Heart right ventricle (tissue), 16 donors: ENCODE measurements at regions of chr9 and their contacts with region 1.

Region 1: DNA sequence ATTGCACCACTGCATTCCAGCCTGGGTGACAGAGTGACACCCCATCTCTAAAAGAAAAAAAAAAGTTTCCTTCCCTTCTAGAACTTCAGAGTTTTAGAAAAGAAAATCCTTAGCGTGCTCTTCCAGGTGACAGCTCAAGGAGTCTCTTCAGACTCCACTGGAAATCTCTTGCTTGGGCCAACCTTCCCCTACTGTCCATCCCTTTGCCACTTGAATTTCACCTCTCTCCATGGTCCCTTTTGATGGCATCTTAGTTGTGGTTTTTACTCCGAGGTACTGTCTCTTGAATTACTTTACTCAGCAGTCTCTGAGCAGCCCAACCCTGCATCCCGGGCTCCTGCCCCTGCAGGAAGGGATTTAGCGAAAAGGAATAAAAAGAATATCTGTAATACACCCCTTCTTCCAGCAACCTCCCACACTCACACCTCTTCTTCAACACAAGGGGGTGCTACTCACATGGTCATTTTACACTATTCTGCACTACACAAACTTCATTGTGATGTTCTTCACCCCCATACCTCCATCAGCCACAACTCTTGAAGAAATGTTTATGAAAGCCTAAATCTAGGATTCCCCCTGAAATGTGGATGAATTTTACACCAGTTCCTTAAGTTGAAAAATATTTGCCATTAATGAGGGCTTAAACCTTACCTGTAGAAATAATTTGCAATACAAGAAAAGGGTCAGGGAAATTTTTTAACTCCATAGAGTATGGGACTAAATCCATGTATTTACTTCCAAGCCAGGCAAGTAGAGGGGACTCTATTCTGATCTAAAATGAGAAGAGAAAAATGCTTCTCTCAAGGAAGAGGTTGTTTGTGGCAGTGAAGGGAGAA is 25.9 kb downstream of the TPD52L3 start:
- DNase-seq: peak in 1 of 2 donors; percentile 12
- ATAC-seq: peak; percentile 61 to 86 (median 80)
- H3K4me3 ChIP-seq: no peak overlapping the region
- H3K27ac ChIP-seq: no peak overlapping the region
- H3K4me1 ChIP-seq: no peaks in the 10 kb centered on the region
- H3K27me3 ChIP-seq: peaks cover 0 to 8% (median 0%) of the 10 kb centered on the region in 7 donors
- CTCF ChIP-seq: peak; percentile 52 to 82 (median 78)

Region 2: DNA sequence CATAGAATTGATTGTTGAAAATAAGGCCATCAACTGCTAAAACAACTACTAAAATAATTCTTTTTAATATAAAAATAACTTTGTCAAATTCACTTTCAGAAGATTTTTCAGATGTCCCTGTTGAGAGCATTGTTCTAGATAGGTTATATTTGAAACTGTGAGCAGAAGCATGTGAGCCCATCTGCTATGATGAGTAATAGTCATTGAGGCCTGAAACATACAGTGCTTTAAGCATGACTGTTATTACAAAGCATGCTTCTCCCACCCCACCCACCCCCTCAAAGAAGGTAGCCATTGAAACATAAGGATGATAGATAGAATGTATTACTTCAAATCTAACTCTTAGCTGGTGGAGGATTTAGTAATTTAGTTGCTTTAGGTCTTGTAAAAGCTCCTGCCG is 144.9 kb after region 1 on chr9:
- intact Hi-C with region 1: loop called in 2 of 10 experiments (anchors 10 kb)
- DNase-seq: no peak
- ATAC-seq: no peak
- H3K4me3 ChIP-seq: no peak overlapping the region
- H3K27ac ChIP-seq: no peak overlapping the region
- H3K4me1 ChIP-seq: peaks cover 0 to 5% (median 0%) of the 10 kb centered on the region in 9 donors
- H3K27me3 ChIP-seq: no peaks in the 10 kb centered on the region
- CTCF ChIP-seq: no peak

Region 3: DNA sequence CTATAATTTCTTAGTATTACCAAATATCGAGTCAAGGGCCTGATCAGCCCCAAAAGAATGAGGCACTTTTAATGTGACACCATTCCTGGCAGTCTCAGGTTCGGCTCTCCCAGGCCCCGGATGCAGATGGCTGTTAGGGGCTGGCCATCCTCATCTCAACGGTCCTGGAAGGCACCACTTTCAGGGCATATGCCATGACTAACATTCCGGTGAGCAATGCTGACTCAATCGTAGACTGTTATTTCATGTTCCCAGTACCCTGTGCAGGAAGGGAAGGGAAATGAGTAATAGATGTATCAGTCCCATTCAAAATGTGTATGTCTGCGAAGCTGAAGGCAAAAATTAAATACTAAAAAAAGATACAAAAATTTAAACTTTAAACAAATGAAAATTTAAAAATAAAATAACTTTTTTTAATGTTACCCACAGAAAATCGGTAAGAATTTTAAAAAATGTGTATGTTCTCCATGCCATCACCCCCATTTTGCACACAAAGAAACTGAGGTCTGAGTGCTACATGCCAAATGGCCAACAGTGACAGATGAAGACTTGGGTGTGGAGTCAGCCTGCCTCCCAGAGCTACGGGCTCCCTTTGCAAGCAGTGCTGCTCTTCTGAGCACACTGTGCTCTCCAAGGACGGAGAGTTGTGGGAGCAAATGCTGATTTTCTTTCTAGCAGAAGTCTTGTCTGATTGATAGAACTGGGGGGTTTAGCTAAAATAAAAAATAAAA is 212.5 kb after region 1 on chr9:
- intact Hi-C with region 1: loop called (anchors 1 to 5 kb)
- DNase-seq: peak in 1 of 2 donors; percentile 11
- ATAC-seq: peak in 3 of 8 donors; percentile 51 to 64 (median 52)
- H3K4me3 ChIP-seq: no peak overlapping the region
- H3K27ac ChIP-seq: peak overlapping the region in 1 of 10 donors; percentile 85
- H3K4me1 ChIP-seq: peaks cover 0 to 54% (median 4%) of the 10 kb centered on the region in 9 donors
- H3K27me3 ChIP-seq: peaks cover 0 to 24% (median 7%) of the 10 kb centered on the region in 7 donors
- CTCF ChIP-seq: no peak

Region 4: DNA sequence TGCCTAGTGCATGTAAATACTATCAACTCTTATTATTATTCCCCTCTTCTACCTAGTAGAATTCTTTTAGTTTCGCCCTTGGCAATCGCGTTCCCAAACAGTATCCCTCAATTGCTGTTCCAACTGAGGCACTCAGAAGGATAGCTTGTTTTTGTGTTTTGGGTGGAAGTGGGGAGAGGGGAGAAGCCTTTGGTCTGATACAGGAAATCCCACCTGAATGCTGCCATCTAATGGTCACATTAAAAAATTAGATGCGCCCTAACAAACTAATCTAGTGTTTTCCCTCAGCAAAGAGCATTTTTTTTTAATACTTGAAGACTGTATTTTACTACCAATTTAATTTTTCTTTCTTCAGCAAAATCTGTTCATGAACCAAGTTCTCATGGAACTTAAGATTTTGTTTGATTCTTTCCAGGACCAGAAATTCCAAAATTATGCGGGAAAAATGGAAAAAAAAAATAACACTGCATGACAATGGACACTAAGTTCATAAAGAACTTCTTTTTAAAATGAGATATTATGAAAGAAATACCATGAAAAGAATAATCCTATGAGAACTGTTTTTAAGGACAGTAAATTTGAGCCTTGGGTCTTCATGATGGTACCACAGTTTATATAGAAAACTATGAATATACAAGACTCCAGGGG is 313.7 kb after region 1 on chr9:
- intact Hi-C with region 1: loop called in 8 of 10 experiments (anchors 5 to 10 kb)
- DNase-seq: no peak
- ATAC-seq: no peak
- H3K4me3 ChIP-seq: no peak overlapping the region
- H3K27ac ChIP-seq: no peak overlapping the region
- H3K4me1 ChIP-seq: no peaks in the 10 kb centered on the region
- H3K27me3 ChIP-seq: no peaks in the 10 kb centered on the region
- CTCF ChIP-seq: peak in 7 of 9 donors; percentile 40 to 62 (median 52)